ENCODE measurements at regions of chr18 and their contacts with region 1.

Region 1: DNA sequence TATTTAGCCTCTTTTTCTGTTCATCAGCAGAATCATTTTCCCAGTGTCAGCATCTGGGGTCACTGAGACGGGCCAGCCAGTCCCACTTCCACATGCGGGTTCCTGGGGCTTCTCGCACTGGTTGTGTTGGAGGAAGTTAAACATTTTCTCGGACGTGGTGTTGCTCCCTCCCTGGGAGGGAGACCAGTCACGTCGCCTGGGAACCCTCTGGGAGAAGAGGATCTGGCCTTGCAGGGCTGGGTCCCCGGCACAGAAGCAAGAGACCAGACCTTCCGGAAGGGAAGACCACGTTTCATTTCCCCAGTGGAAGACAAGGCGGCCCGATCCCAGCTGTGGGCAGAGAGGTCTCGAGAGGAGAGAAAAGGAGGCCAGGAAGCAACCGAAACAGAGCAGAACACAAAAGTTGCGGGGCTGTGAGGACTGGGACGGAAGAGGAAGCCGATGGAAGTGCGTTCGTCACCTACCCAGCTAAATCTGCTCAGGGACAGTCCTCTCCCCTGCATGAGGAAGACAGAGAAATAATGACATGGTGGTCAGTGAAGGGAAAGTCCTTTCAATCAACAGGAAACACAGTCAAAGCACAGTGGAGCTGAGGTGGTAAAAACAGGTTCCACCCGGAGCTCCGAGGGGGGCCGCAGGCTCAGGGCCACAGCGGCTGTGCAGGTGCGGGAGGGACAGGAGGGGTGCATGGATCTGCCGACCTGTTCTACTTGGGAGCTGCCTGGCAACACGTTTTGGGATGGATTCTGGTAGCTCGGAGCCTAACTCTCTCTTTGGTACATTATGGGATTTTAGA is 144.4 kb downstream of the MBP start:
- DNase-seq: peak in 2 of 3 donors; percentile 52 to 66
- ATAC-seq: peak; percentile 45 to 59 (median 45)
- H3K4me3 ChIP-seq: no peak overlapping the region
- H3K27ac ChIP-seq: peak overlapping the region; percentile 31 to 51 (median 37)
- H3K4me1 ChIP-seq: no peaks in the 10 kb centered on the region
- H3K27me3 ChIP-seq: no peaks in the 10 kb centered on the region
- CTCF ChIP-seq: no peak
- POLR2A ChIP-seq: peak; percentile 13

Region 2: DNA sequence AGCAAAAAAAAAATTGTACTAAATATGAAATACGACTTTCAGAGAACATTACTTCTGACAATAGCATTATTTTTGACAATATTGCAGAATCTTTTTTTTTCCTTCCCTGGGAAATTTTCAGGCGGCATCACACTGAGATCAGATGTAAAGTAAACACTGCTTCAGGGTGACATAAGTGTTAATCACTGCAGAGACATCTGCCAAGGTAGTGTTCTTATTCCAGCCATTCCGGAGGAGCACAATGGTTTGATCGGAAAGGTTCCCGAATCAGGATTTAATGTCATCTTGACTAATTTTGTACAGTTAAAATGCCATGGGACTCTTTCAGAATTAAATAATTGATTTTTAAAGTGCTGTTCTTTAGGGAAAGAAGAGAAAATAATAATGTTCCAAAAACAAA is 222.6 kb before region 1 on chr18:
- intact Hi-C with region 1: no loop called
- DNase-seq: no peak
- ATAC-seq: no peak
- H3K4me3 ChIP-seq: no peak overlapping the region
- H3K27ac ChIP-seq: no peak overlapping the region
- H3K4me1 ChIP-seq: no peaks in the 10 kb centered on the region
- H3K27me3 ChIP-seq: no peaks in the 10 kb centered on the region
- CTCF ChIP-seq: no peak
- POLR2A ChIP-seq: no peak

Region 3: DNA sequence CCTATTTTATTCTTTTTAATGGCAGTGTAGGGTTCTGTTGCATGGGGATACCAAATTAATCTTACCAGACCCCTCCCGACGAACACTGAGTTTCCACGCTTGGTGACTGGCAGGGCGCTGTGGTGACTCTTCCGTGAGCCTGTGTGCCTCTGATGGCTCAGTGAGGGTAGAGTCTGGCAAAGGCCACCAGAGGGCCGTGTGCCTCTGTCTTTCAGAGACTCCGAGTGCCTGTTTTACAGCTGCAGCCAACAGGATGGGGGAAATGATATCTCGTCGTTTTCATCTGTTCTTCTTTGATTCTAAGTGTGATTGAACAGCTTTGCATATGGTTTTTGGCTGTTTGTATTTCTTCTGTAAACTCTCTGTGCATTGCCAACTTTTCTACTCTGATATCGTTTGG is 66.1 kb before region 1 on chr18:
- intact Hi-C with region 1: loop called in 1 of 2 experiments (anchors 5 kb)
- DNase-seq: peak; percentile 57 to 70 (median 66)
- ATAC-seq: peak; percentile 96 to 99 (median 98)
- H3K4me3 ChIP-seq: no peak overlapping the region
- H3K27ac ChIP-seq: no peak overlapping the region
- H3K4me1 ChIP-seq: no peaks in the 10 kb centered on the region
- H3K27me3 ChIP-seq: no peaks in the 10 kb centered on the region
- CTCF ChIP-seq: peak; percentile 62 to 74 (median 68)
- POLR2A ChIP-seq: no peak

Region 4: DNA sequence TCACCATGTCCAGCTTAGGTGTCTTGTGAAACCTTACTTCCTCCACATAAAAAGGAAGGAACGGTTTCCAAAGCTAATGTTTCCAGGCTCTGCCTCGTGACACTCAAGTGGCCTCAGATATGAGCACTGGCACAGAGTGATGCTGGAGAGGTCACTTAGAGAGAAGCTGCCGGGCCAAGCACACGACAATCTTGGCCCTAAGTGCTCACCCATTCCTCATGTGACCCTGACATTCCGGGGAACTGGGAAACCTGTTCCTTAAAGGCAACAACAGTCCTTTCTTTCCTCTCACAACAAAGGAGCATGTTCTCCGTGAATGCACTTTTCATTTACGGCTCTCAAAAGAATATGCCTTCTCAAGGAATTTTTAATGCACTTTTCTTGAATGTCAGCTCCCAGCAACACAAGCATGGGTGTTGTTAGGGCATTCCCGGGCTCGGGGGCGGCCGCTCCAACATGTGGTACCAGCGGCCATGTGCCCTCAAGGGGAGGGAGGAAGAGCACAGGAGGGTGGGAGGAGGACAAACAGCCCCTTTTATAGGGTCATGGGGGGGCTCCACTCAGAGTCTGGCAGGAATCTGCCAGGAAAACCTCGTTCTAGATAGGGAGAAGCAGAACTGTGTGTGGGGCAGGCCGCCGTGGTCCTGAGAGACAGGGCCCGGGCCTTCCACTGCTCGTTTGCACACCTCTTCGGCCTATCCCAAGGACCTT is 25.7 kb after region 1 on chr18:
- intact Hi-C with region 1: no loop called
- DNase-seq: no peak
- ATAC-seq: peak; percentile 60 to 74 (median 68)
- H3K4me3 ChIP-seq: no peak overlapping the region
- H3K27ac ChIP-seq: peak overlapping the region in 1 of 3 donors; percentile 46
- H3K4me1 ChIP-seq: peaks cover 0 to 7% (median 3%) of the 10 kb centered on the region in 4 donors
- H3K27me3 ChIP-seq: no peaks in the 10 kb centered on the region
- CTCF ChIP-seq: no peak
- POLR2A ChIP-seq: peak; percentile 23

Measured in right lobe of liver (tissue), 6 donors.